IMR-90 (cell line): ENCODE measurements at regions of chr7 and their contacts with region 1.

Region 1: GRCh38 chr7:32942786-32943653 is 14.2 kb upstream of the FKBP9 start:
- DNase-seq: peak; percentile 71
- ATAC-seq: peak; percentile 97
- H3K4me3 ChIP-seq: peak overlapping the region; percentile 94
- H3K27ac ChIP-seq: peak overlapping the region; percentile 95
- H3K4me1 ChIP-seq: peaks cover under 1% of the 10 kb centered on the region; the same call in 1 of the 2 replicates
- H3K27me3 ChIP-seq: no peaks in the 10 kb centered on the region
- CTCF ChIP-seq: peak; percentile 70
- POLR2A ChIP-seq: no peak; the same call in 1 of the 2 replicates
- RAD21 ChIP-seq: peak; percentile 69

Region 2: DNA sequence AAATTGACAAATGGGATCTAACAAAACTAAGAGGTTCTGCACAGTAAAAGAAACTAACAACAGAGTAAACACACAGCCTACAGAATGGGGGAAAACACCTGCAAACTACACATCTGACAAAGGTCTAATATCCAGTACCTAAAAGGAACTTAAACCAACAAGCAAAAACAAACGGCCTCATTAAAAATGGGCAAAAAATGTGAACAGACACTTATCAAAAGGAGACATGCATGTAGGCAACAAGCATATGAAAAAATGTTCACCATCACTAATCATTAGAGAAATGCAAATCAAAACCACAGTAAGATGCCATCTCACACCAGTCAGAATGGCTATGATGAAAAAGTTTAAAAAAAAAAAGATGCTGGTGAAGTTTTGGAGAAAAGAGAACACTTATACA is 248.8 kb before region 1 on chr7:
- CTCF ChIA-PET with region 1: no interaction called
- POLR2A ChIA-PET with region 1: no interaction called
- dilution Hi-C with region 1: no loop called
- in situ Hi-C with region 1: no loop called
- intact Hi-C with region 1: no loop called
- DNase-seq: no peak
- ATAC-seq: no peak
- H3K4me3 ChIP-seq: no peak overlapping the region
- H3K27ac ChIP-seq: no peak overlapping the region
- H3K4me1 ChIP-seq: no peaks in the 10 kb centered on the region
- H3K27me3 ChIP-seq: no peaks in the 10 kb centered on the region
- CTCF ChIP-seq: no peak
- POLR2A ChIP-seq: no peak
- RAD21 ChIP-seq: no peak

Region 3: DNA sequence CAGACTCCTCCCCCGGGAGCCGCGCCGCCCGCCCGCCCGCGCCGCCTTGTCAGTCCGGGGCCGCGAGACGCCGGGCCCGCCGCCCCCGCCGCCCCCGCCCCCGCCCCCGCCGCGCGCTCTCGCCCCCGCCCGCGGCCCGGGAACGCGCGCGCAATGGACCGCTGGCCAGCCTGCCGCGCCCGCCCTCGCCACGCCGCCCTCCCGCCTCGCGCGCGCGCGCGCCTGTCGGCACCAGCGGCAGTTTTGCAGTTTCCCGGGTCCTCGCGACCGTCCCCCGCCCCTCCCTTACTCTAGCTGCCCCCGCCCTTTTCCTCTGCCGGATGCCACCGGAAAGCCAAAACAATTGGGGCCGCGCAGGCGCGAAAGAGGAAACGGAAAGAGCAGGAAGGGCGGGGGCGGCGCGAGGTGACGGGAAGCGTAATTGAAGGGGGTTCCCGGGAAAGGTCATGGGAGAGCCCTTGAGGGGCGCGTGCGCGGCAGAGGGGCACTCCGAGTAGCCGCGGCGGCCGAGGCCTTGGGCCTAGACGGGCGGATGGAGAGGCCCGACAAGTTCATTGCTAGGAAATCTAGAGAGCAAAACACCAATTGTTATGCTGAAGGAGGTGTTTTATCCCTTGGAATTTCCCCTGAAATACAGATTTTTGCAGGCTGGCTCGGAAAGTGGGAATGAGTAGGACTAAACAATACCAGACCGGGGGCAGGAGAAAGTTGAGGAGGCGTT is 51.1 kb before region 1 on chr7:
- CTCF ChIA-PET with region 1: no interaction called
- POLR2A ChIA-PET with region 1: no interaction called
- dilution Hi-C with region 1: no loop called
- in situ Hi-C with region 1: no loop called
- intact Hi-C with region 1: loop called (anchors 5 kb)
- DNase-seq: peak; percentile 92
- ATAC-seq: peak; percentile 79
- H3K4me3 ChIP-seq: peak overlapping the region; percentile 86
- H3K27ac ChIP-seq: peak overlapping the region; percentile 99
- H3K4me1 ChIP-seq: peaks cover 2% of the 10 kb centered on the region; the same call in 1 of the 2 replicates
- H3K27me3 ChIP-seq: no peaks in the 10 kb centered on the region
- CTCF ChIP-seq: no peak
- POLR2A ChIP-seq: peak; percentile 39; the same call in 1 of the 2 replicates
- RAD21 ChIP-seq: no peak

Region 4: DNA sequence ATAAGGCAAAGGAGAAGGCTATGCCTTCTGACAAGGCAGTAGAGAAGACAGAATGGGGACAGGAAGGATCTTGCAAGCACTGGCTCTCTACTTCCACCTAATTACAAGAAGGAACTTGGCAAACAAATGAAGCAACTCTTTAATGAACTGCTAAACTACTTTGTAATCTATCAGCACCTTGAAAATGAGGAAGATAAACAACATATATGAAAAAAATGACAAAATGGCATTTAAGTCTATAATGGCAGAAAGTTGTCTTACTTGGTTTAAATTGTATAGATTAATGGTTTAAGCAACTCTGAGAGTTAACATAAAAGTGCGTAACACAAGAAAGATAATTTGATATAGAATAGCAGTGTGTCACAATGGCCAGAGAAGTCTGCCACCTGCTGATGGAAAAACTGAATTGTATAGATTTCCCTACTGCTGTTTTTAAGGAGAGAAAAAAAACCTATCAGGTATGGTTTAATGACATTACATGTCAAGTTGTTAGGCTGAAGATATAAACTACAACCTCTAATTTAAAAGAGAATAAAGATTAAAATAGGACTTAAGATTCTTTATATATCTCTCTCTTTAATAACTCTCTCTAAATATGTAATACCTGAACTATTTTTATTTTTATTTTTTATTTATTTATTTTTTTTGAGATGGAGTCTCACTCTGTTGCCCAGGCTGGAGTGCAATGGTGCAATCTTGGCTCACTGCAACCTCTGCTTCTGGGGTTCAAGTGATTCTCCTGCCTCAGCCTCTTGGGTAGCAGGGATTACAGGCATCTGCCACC is 107.7 kb after region 1 on chr7:
- CTCF ChIA-PET with region 1: no interaction called
- POLR2A ChIA-PET with region 1: no interaction called
- dilution Hi-C with region 1: no loop called
- in situ Hi-C with region 1: no loop called
- intact Hi-C with region 1: loop called (anchors 5 kb)
- DNase-seq: peak; percentile 59
- ATAC-seq: peak; percentile 61
- H3K4me3 ChIP-seq: no peak overlapping the region
- H3K27ac ChIP-seq: no peak overlapping the region
- H3K4me1 ChIP-seq: peaks cover 3% of the 10 kb centered on the region
- H3K27me3 ChIP-seq: no peaks in the 10 kb centered on the region
- CTCF ChIP-seq: peak; percentile 68
- POLR2A ChIP-seq: no peak
- RAD21 ChIP-seq: peak; percentile 78